Sciatic nerve (tissue), 2 donors: ENCODE measurements at regions of chr1 and their contacts with region 1.

Region 1: DNA sequence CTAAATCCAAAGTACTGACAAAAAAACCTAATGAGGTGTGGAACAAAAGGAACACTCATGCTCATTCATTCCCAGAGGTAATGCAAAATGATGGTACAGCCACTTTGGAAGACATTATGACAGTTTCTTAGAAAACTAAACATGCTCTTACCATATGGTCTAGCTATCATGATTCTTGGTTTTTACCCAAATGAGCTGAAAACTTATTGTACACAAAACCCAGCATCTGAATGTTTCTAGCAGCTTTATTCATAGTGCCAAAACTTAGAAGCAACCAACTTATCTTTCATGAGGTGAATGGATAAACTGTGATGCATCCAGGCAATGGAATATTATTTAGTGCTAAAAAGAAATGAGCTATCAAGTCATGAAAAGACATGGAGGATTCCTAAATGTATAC is 318.4 kb upstream of the OLFM3 start:
- DNase-seq: no peak
- ATAC-seq: no peak

Region 2: DNA sequence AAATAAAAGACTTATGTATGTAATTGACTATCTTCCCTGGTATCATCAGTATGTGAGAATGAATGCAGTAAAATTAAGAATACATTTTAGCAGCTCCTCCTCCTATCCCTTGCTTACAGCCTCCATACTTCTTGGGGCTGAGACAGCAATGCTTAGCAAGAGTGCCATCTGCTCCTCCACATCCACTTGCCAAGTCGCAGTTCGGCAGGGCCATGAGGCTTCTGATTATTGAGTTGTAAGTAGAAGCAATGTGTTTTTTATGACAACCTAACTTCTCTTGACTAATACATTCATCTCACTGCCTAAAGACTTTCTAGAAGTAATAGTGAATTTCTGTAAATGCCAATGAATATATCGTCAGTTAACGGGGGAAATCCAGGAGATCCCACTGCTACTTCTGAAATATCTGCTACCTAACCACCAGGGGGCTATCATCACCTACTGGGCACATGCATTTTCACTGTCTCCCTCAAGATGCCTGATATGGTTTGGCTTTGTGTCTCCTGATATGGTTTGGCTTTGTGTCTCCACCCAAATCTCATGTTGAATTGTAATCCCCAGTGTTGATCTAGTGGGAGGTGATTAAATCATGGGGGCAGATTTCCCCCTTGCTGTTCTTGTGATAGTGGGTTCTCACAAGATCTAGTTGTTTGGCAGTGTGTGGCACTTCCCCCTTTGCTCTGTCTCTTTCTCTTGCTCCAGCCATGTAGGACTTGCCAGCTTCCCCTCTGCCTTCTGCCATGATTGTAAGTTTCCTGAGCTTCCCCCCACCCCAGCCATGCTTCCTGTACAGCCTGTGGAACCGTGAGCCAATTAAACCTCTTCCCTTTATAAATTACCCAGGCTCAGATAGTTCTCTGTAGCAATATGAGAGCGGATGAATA is 1480.1 kb before region 1 on chr1:
- intact Hi-C with region 1: loop called (anchors 10 kb)
- DNase-seq: no peak
- ATAC-seq: no peak

Region 3: GRCh38 chr1:102783487-102783886 is 468.4 kb after region 1 on chr1:
- intact Hi-C with region 1: no loop called
- DNase-seq: no peak
- ATAC-seq: no peak